ENCODE measurements at regions of chr20 and their contacts with region 1.

Region 1: GRCh38 chr20:44683263-44684046 is 31.7 kb upstream of the CCN5 start:
- DNase-seq: peak; percentile 64
- H3K4me3 ChIP-seq: no peak overlapping the region
- H3K27ac ChIP-seq: no peak overlapping the region
- H3K4me1 ChIP-seq: no peaks in the 10 kb centered on the region
- H3K27me3 ChIP-seq: no peaks in the 10 kb centered on the region
- CTCF ChIP-seq: peak; percentile 67 to 75
- POLR2A ChIP-seq: no peak

Region 2: DNA sequence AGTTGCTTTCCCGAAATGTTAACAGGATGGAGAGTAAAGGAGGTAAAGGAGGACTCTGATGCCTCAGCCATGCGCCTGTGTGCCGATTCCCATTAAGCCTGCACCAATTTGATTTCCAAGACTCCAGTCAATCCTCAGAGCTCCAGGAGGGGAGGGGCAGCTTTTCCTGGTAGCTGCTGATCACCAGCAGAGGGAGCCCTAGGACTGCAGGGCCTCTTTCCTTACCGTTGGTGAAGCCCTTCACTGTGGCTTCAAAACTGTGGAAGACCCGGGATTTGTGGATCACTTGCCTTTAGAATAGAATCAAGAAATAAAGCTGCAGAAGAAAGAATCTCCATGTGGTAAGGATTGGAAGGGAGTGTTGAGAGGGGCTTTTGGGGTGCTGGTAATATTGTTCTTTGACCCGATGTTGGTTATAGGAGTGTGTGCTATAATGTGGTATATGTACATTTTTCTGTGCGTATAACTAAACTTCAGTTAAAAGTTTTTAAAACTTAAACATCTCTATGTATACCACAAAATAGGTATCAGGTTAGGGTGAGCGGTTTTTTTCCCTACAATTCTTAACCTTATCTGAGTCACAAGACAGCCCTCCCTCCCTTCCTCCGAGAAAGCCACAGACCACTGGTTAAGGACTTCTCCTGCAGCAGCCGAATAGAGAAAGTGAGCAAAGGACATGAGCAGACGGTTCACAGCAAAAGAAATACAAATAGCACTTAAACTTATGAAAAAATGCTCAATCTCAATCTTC is 465.9 kb before region 1 on chr20:
- CTCF ChIA-PET with region 1: interaction called, 12 read pairs
- POLR2A ChIA-PET with region 1: no interaction called
- dilution Hi-C with region 1: no loop called
- intact Hi-C with region 1: no loop called
- DNase-seq: peak; percentile 55
- H3K4me3 ChIP-seq: no peak overlapping the region
- H3K27ac ChIP-seq: no peak overlapping the region
- H3K4me1 ChIP-seq: no peaks in the 10 kb centered on the region
- H3K27me3 ChIP-seq: no peaks in the 10 kb centered on the region
- CTCF ChIP-seq: peak; percentile 80 to 91
- POLR2A ChIP-seq: no peak

Region 3: GRCh38 chr20:44319756-44320422 is 363.6 kb before region 1 on chr20:
- CTCF ChIA-PET with region 1: no interaction called
- POLR2A ChIA-PET with region 1: no interaction called
- dilution Hi-C with region 1: no loop called
- intact Hi-C with region 1: no loop called
- DNase-seq: no peak
- H3K4me3 ChIP-seq: no peak overlapping the region
- H3K27ac ChIP-seq: no peak overlapping the region
- H3K4me1 ChIP-seq: no peaks in the 10 kb centered on the region
- H3K27me3 ChIP-seq: peaks cover 0 to 3% of the 10 kb centered on the region in 2 experiments
- CTCF ChIP-seq: no peak
- POLR2A ChIP-seq: no peak

Region 4: DNA sequence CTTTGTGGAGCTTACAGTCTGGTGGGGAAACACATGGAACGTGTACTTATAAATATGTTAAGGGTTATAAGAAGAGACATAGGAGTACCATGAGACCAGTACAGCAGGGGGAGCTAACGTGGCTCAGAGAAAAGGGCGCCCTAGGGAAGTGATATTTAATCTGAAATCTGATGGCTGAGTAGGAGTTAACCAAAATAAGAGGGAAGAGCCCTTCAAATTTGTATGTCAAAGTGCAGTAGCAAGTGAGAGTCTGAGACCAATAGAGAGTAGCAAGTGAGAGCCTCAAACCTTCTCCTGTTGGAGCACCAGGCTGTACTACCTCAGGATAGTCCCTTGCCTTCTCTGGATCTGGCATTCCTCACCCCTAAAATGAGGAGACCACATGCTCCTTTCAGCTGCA is 107.2 kb before region 1 on chr20:
- CTCF ChIA-PET with region 1: interaction called, 16 read pairs
- POLR2A ChIA-PET with region 1: no interaction called
- dilution Hi-C with region 1: no loop called
- intact Hi-C with region 1: no loop called
- DNase-seq: peak; percentile 76
- H3K4me3 ChIP-seq: no peak overlapping the region
- H3K27ac ChIP-seq: peak overlapping the region; percentile 61
- H3K4me1 ChIP-seq: peaks cover 53% of the 10 kb centered on the region
- H3K27me3 ChIP-seq: no peaks in the 10 kb centered on the region
- CTCF ChIP-seq: peak; percentile 35 to 51
- POLR2A ChIP-seq: no peak

Region 5: DNA sequence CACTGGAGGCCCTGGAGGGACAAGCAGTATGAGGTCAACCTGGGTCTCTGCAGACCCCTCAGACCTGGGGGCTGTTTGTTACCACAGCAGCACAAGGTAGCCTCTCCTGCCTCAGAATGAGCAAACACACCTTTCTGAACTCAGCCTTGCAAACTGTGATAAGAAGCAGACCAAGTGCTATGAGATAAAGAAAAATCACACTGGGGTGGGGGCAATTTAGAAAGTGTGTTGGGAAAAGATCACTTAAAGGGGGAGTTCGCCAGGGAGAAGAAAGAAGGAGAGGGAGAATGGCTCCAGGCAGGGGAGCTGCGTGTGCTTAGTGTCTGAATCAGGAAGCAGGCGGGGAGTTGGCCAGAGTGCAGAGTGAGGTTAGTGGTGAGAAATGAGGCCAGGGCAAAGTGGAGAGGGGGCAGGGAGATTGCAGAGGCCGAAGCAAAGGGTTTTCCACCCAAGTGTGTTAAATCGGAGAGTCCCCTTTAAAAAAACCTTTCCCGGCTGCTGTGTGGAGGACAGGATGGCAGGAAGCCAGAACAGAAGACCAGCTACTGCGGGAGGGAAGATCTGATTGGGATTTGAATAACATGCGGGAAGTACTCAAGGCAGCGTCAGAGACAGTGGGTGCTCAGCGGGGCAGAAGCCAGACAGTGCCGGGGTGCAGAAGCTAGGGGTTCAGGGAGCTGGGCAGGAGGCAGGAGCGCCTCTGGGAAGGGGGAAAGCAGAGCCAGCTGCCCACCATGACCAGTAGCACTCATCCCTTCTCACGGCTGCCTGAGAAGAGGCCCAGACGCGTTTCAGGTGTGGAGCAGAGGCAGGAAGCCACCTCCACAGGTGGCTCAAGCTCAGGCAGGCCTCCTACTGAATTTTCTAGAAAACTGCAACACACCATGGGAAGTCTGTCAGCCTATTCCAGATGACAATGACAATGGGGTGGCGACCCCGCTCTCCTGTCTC is 41.0 kb before region 1 on chr20:
- CTCF ChIA-PET with region 1: interaction called, 39 read pairs
- POLR2A ChIA-PET with region 1: no interaction called
- dilution Hi-C with region 1: no loop called
- intact Hi-C with region 1: no loop called
- DNase-seq: peak; percentile 89
- H3K4me3 ChIP-seq: no peak overlapping the region
- H3K27ac ChIP-seq: peak overlapping the region; percentile 98
- H3K4me1 ChIP-seq: peaks cover 48% of the 10 kb centered on the region
- H3K27me3 ChIP-seq: no peaks in the 10 kb centered on the region
- CTCF ChIP-seq: no peak
- POLR2A ChIP-seq: peak; percentile 21

Region 6: GRCh38 chr20:44702776-44703175 is 19.3 kb after region 1 on chr20:
- CTCF ChIA-PET with region 1: interaction called, 11 read pairs
- POLR2A ChIA-PET with region 1: no interaction called
- dilution Hi-C with region 1: no loop called
- intact Hi-C with region 1: no loop called
- DNase-seq: peak; percentile 94
- H3K4me3 ChIP-seq: no peak overlapping the region
- H3K27ac ChIP-seq: no peak overlapping the region
- H3K4me1 ChIP-seq: peaks cover 13% of the 10 kb centered on the region
- H3K27me3 ChIP-seq: no peaks in the 10 kb centered on the region
- CTCF ChIP-seq: no peak
- POLR2A ChIP-seq: no peak

Region 7: GRCh38 chr20:44747166-44748004 is 63.9 kb after region 1 on chr20:
- CTCF ChIA-PET with region 1: interaction called, 28 read pairs
- POLR2A ChIA-PET with region 1: no interaction called
- dilution Hi-C with region 1: no loop called
- intact Hi-C with region 1: no loop called
- DNase-seq: peak; percentile 63
- H3K4me3 ChIP-seq: no peak overlapping the region
- H3K27ac ChIP-seq: no peak overlapping the region
- H3K4me1 ChIP-seq: peaks cover 4% of the 10 kb centered on the region
- H3K27me3 ChIP-seq: peaks cover 11 to 15% of the 10 kb centered on the region in 2 experiments
- CTCF ChIP-seq: peak; percentile 70 to 79
- POLR2A ChIP-seq: no peak

Measured in endothelial cell of umbilical vein (primary cell).